Activated T-helper 1 cell treated with anti-CD3 and anti-CD28 coated beads, Interleukin-12 subunit alpha, Interleukin-12 subunit beta, Interleukin-2, Interleukin-4 antibody, amounts not matched to agents 30 ng/mL and 10 ng/mL and 1 ng/mL, durations not matched to agents 14 hours and 24 hours and 36 hours (primary cell): ENCODE measurements at regions of chr3 and their contacts with region 1.

Region 1: GRCh38 chr3:194682694-194683310 is 2.9 kb upstream of the FAM43A start:
- DNase-seq: peak; percentile 58
- H3K4me3 Mint-ChIP-seq: no peak overlapping the region
- H3K27ac Mint-ChIP-seq: no peak overlapping the region
- H3K4me1 Mint-ChIP-seq: peaks cover 42% of the 10 kb centered on the region
- H3K27me3 Mint-ChIP-seq: peaks cover 20% of the 10 kb centered on the region

Region 2: DNA sequence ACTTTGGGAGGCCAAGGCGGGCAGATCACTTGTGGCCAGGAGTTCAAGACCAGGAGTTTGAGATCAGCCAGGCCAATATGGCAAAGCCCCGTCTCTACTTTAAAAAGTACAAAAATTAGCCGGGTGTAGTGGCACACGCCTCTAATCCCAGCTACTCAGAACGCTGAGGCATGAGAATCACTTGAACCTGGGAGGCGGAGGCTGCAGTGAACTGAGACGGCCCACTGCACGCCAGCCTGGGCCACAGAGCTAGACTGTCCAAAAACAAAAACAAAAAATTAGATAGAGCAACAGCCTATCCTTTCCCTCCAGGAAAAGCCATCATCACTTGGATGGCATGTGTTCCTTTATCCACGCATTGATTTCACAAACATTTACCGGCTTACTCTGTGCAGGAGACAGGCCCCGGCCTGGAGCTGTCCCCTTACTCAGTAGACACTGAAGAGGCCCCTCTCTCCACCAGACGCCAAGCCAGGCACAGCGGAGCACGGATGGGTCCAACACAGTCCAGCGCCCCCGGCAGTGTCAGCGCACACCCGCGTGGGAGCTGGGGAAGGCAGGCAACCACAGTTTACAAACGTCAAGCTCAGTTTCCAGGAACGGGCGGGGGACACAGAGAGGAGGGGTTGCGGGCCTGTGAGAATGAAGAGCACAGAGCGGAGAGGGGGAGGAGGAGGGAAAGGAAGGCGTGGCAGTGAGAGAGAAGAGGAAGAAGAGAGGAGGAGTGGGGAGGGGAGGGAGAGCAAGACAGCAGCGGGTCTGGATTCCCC is 286.8 kb before region 1 on chr3:
- intact Hi-C with region 1: no loop called
- DNase-seq: peak; percentile 67
- H3K4me3 Mint-ChIP-seq: peak overlapping the region; percentile 76
- H3K27ac Mint-ChIP-seq: peak overlapping the region; percentile 53
- H3K4me1 Mint-ChIP-seq: peaks cover 57% of the 10 kb centered on the region
- H3K27me3 Mint-ChIP-seq: peaks cover 4% of the 10 kb centered on the region

Region 3: GRCh38 chr3:194906229-194906629 is 223.4 kb after region 1 on chr3:
- intact Hi-C with region 1: loop called (anchors 5 kb)
- DNase-seq: no peak
- H3K4me3 Mint-ChIP-seq: no peak overlapping the region
- H3K27ac Mint-ChIP-seq: no peak overlapping the region
- H3K4me1 Mint-ChIP-seq: peaks cover 13% of the 10 kb centered on the region
- H3K27me3 Mint-ChIP-seq: peaks cover 4% of the 10 kb centered on the region

Region 4: DNA sequence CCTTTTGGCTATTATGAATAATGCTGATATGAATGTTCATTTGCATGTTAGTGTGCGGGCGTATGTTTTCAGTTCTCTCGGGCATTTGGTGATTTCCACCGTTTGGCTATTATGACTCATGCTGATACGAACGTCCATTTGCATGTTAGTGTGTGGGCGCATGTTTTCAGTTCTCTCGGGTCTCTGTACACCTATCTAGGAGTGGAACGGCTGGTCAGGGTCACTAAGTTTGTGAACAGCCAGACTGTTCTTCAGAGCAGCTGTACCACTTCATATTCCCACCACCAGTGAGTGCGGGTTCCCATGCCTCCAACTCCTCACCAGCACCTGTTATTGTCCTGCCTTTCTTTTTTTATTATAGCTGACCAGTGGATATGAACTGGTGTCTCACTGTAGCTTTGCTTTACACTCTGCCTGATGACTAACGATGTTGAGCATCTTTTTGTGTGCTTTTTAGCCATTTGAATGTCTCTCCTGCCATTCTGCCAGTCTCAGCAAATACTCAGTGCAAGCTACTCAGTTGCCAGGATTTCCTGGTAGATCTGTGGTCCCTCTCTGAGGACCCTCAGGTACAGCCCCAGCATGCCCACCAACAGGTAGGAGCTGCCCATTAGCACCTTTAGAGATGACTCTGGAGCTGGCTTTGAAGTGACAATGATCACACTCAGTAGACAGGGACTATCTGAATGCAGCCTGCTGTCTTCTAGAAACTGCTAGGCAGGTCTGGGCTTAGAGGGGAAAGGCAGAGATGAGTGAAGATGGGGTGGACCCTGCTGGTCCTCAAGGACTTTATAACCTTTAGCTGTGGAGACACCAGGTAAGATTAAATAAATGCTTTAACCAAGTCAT is 447.1 kb after region 1 on chr3:
- intact Hi-C with region 1: loop called (anchors 5 kb)
- DNase-seq: no peak
- H3K4me3 Mint-ChIP-seq: peak overlapping the region; percentile 20
- H3K27ac Mint-ChIP-seq: peak overlapping the region; percentile 61
- H3K4me1 Mint-ChIP-seq: peaks cover 31% of the 10 kb centered on the region
- H3K27me3 Mint-ChIP-seq: no peaks in the 10 kb centered on the region

Region 5: GRCh38 chr3:195259475-195260279 is 576.9 kb after region 1 on chr3:
- intact Hi-C with region 1: loop called (anchors 1 kb)
- DNase-seq: peak; percentile 76
- H3K4me3 Mint-ChIP-seq: peak overlapping the region; percentile 15
- H3K27ac Mint-ChIP-seq: no peak overlapping the region
- H3K4me1 Mint-ChIP-seq: peaks cover 24% of the 10 kb centered on the region
- H3K27me3 Mint-ChIP-seq: no peaks in the 10 kb centered on the region

Region 6: GRCh38 chr3:195442573-195443390 is 760.0 kb after region 1 on chr3 and contains the start of gene ACAP2:
- intact Hi-C with region 1: loop called (anchors 5 kb)
- DNase-seq: peak; percentile 99
- H3K4me3 Mint-ChIP-seq: peak within 1 kb of the TSS; percentile 92
- H3K27ac Mint-ChIP-seq: peak within 1 kb of the TSS; percentile 86
- H3K4me1 Mint-ChIP-seq: peaks cover 42% of the 10 kb centered on the region
- H3K27me3 Mint-ChIP-seq: no peaks in the 10 kb centered on the region
- total RNA-seq, gene ACAP2: 38.2 and 46.3 TPM in 2 replicates

Region 7: DNA sequence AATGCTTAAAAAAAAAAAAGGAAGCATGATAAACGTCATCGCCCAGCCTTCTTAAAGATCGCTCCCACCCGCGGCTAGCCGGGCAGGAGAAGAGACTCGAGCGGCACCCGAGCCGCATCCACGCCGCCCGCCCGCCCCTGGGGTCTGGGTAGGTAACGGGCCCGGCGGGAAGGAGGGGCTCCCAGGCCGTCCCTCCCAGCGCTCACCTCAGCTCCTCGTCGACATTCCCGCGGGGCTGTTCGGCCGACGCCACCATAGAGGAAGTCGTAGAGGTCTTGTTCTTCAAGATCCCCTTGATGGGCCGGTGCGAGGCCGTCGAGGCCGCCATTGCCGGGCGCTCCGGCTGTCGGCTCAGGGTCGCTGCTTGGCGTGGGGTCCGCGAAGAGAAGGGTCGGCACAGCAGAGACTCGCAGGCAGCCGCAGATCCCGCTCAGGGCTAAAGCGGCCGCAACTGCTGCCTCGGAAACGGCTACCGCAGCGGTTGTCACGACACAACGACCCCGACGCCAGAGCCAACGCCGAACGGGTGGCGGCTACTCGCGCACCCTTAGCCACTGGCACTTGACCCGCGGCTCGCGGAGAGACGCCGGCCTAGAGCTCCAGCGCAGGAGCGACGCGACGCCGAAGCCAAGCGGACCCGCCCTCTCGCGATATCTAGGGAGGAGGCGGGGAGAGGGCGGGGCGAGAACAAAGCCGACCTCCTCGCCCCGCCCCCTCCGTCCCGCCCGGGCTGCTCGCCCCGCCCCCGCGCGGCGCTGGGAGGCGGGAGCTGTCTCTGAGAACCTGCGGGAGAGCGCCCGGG is 860.1 kb after region 1 on chr3 and contains the start of gene PPP1R2:
- intact Hi-C with region 1: loop called (anchors 5 kb)
- DNase-seq: peak; percentile 88
- H3K4me3 Mint-ChIP-seq: peak within 1 kb of the TSS; percentile 88
- H3K27ac Mint-ChIP-seq: peak within 1 kb of the TSS; percentile 82
- H3K4me1 Mint-ChIP-seq: peaks cover 84% of the 10 kb centered on the region
- H3K27me3 Mint-ChIP-seq: no peaks in the 10 kb centered on the region
- total RNA-seq, gene PPP1R2: 98.8 and 106 TPM in 2 replicates